Activated CD4-positive, alpha-beta memory T cell treated with anti-CD3 and anti-CD28 coated beads, Interleukin-2, amount 10 ng/mL, durations not matched to agents 7 days and 5 days (primary cell): ENCODE measurements at regions of chr14 and their contacts with region 1.

Region 1: GRCh38 chr14:92093320-92093719 is 13.1 kb downstream of the ATXN3 start:
- DNase-seq: no peak
- H3K4me3 Mint-ChIP-seq: no peak overlapping the region
- H3K27ac Mint-ChIP-seq: no peak overlapping the region
- H3K4me1 Mint-ChIP-seq: no peaks in the 10 kb centered on the region
- H3K27me3 Mint-ChIP-seq: no peaks in the 10 kb centered on the region

Region 2: GRCh38 chr14:91836119-91836881 is 257.0 kb before region 1 on chr14:
- CTCF ChIA-PET with region 1: no interaction called
- POLR2A ChIA-PET with region 1: no interaction called
- DNase-seq: peak; percentile 83
- H3K4me3 Mint-ChIP-seq: peak overlapping the region; percentile 84
- H3K27ac Mint-ChIP-seq: peak overlapping the region; percentile 26
- H3K4me1 Mint-ChIP-seq: peaks cover 66% of the 10 kb centered on the region
- H3K27me3 Mint-ChIP-seq: peaks cover 7% of the 10 kb centered on the region

Region 3: DNA sequence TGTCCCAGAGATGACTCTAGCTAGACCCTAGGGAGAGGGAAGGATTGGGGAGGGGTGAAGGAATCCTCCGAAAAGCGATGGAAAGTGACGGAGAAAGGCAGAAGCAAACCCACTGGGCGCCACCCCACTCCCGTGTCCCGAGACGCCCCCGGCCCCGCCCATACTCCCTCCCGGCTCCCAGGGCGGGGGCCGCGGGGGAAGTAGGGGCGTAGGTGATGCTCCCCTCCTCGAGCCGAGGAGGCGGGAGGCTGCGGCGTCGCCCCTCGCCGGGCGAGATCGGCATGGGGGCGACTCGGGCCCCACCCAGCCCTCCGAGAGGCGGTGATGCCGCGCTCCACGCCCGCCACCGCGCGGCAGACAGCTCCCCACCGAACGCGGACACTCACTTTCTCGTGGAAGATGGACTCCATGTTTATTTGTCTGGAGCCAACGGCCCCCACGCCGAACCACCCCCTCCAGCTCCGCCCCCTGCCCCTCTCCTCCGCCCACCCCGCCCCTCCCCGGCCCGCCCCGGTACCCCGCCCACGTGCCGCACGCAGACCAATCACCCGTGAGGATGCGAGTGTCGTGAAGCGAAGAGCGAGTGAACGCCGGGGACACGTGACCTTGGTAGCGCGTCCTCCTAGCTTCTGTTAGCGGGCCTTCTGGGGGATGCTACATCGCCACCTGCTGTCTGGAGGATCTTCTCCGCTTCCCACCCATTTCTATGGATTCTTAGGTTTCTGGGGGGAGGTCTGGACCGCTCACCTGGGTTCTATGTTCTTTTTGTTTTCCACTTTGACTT is 13.0 kb after region 1 on chr14 and contains the start of gene ATXN3:
- CTCF ChIA-PET with region 1: interaction called, 12 read pairs
- POLR2A ChIA-PET with region 1: no interaction called
- DNase-seq: peak; percentile 96
- H3K4me3 Mint-ChIP-seq: peak within 1 kb of the TSS; percentile 93
- H3K27ac Mint-ChIP-seq: peak within 1 kb of the TSS; percentile 92
- H3K4me1 Mint-ChIP-seq: peaks cover 38% of the 10 kb centered on the region
- H3K27me3 Mint-ChIP-seq: no peaks in the 10 kb centered on the region
- total RNA-seq, gene ATXN3: 29.3 to 30.5 TPM